ENCODE measurements at regions of chr20 and their contacts with region 1.

Region 1: GRCh38 chr20:45011108-45011526 is 44.8 kb downstream of the STK4 start:
- DNase-seq: peak; percentile 43 to 58
- H3K4me3 ChIP-seq: no peak overlapping the region
- H3K27ac ChIP-seq: no peak overlapping the region
- H3K4me1 ChIP-seq: peaks cover 46% of the 10 kb centered on the region
- H3K27me3 ChIP-seq: no peaks in the 10 kb centered on the region
- CTCF ChIP-seq: peak; percentile 94

Region 2: GRCh38 chr20:43942661-43943290 is 1068.3 kb before region 1 on chr20:
- CTCF ChIA-PET with region 1: no interaction called
- POLR2A ChIA-PET with region 1: no interaction called
- intact Hi-C with region 1: no loop called
- DNase-seq: peak; percentile 70 to 85
- H3K4me3 ChIP-seq: peak overlapping the region; percentile 53
- H3K27ac ChIP-seq: peak overlapping the region; percentile 95
- H3K4me1 ChIP-seq: peaks cover 68% of the 10 kb centered on the region
- H3K27me3 ChIP-seq: no peaks in the 10 kb centered on the region
- CTCF ChIP-seq: no peak

Region 3: GRCh38 chr20:44997171-44998067 is 13.7 kb before region 1 on chr20:
- CTCF ChIA-PET with region 1: no interaction called
- POLR2A ChIA-PET with region 1: no interaction called
- intact Hi-C with region 1: no loop called
- DNase-seq: no peak
- H3K4me3 ChIP-seq: no peak overlapping the region
- H3K27ac ChIP-seq: no peak overlapping the region
- H3K4me1 ChIP-seq: peaks cover 12% of the 10 kb centered on the region; the same call in 1 of the 2 replicates
- H3K27me3 ChIP-seq: no peaks in the 10 kb centered on the region
- CTCF ChIP-seq: no peak

Region 4: DNA sequence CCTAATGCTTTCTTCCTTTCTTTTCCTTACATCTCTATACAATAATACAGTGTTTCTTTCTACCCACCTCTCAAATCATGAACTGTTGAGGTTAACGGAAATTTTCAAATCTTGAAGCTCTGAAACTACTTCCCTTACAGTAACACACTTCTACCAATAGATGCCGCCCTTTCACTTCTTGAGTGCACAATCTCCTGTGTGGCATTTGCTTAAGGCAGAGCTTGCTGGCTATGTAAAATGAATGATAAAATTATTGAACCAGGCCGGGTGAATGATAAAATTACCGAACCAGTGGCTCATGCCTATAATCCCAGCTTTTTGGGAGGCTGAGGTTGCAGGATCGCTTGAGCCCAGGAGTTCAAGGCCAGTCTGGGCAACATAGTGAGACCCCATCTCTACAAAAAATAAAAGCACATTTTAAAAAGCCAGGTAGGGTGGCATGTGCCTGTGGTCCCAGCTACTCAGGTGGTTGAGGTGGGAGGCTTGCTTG is 33.0 kb after region 1 on chr20:
- CTCF ChIA-PET with region 1: interaction called, 27 read pairs
- POLR2A ChIA-PET with region 1: interaction called, 9 read pairs
- intact Hi-C with region 1: loop called (anchors 1 kb)
- DNase-seq: peak; percentile 37 to 77
- H3K4me3 ChIP-seq: no peak overlapping the region
- H3K27ac ChIP-seq: no peak overlapping the region
- H3K4me1 ChIP-seq: peaks cover 26% of the 10 kb centered on the region
- H3K27me3 ChIP-seq: no peaks in the 10 kb centered on the region
- CTCF ChIP-seq: peak; percentile 96

Region 5: DNA sequence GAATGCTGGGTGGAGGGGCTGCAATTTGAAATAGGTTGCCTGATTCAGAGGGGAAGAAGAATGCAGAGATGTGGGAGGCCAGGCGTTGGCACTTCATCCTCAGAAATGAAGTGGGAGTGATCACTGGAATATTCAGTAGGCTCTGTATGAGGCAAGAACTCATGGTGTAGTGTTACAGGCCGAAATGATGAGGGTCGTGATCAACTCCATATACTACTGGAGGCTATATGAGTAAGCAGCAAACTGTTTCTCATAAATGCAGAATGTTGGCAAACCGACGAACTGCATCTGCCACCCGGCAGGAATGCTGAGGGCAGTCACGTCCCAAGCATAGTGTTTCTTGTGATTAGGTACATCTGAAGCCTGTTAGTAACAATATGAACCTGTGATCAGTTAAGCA is 77.1 kb after region 1 on chr20:
- CTCF ChIA-PET with region 1: interaction called, 18 read pairs
- POLR2A ChIA-PET with region 1: no interaction called
- intact Hi-C with region 1: no loop called
- DNase-seq: peak in 1 of 2 experiments; percentile 78
- H3K4me3 ChIP-seq: no peak overlapping the region
- H3K27ac ChIP-seq: peak overlapping the region; percentile 41
- H3K4me1 ChIP-seq: peaks cover 14% of the 10 kb centered on the region
- H3K27me3 ChIP-seq: no peaks in the 10 kb centered on the region
- CTCF ChIP-seq: no peak

Region 6: GRCh38 chr20:45157962-45158361 is 146.8 kb after region 1 on chr20:
- CTCF ChIA-PET with region 1: interaction called, 16 read pairs
- POLR2A ChIA-PET with region 1: no interaction called
- intact Hi-C with region 1: no loop called
- DNase-seq: peak in 1 of 2 experiments; percentile 85
- H3K4me3 ChIP-seq: no peak overlapping the region
- H3K27ac ChIP-seq: no peak overlapping the region
- H3K4me1 ChIP-seq: peaks cover 22% of the 10 kb centered on the region
- H3K27me3 ChIP-seq: no peaks in the 10 kb centered on the region
- CTCF ChIP-seq: no peak

Region 7: GRCh38 chr20:45293041-45294002 is 282.2 kb after region 1 on chr20:
- CTCF ChIA-PET with region 1: interaction called, 9 read pairs
- POLR2A ChIA-PET with region 1: no interaction called
- intact Hi-C with region 1: loop called (anchors 1 kb)
- DNase-seq: peak; percentile 61 to 91
- H3K4me3 ChIP-seq: peak overlapping the region; percentile 60
- H3K27ac ChIP-seq: no peak overlapping the region
- H3K4me1 ChIP-seq: peaks cover 15% of the 10 kb centered on the region
- H3K27me3 ChIP-seq: no peaks in the 10 kb centered on the region
- CTCF ChIP-seq: peak; percentile 97

Region 8: DNA sequence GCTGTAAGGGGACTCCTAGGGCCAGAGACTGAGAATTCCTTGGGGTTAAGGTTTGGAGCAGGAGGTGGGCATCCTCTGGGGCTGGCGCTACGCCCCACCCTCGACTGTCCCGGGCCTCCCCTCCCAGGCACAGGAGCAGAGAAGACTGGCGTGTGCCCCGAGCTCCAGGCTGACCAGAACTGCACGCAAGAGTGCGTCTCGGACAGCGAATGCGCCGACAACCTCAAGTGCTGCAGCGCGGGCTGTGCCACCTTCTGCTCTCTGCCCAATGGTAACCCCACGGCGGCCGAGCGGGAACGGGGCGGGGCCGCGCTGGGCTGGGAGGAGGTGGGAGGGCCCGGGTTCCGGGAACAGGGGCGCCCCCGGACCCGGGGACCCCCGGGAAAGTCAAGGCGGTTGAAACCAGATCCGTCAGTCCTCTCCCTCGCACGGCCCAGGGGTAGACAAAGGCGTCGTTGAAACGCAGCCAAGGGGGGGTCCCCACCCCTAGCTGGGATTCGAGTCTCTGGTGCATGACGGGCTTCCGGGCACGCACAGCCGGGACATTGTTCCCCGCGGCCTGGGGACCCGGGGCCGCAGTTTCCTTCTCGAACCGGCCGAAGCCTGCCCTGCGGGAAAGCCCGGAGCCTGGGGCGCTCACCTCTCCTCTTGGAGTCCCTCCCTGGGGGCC is 459.3 kb after region 1 on chr20:
- CTCF ChIA-PET with region 1: interaction called, 10 read pairs
- POLR2A ChIA-PET with region 1: no interaction called
- intact Hi-C with region 1: no loop called
- DNase-seq: peak; percentile 63 to 82
- H3K4me3 ChIP-seq: peak overlapping the region; percentile 67
- H3K27ac ChIP-seq: peak overlapping the region; percentile 88
- H3K4me1 ChIP-seq: peaks cover 29% of the 10 kb centered on the region
- H3K27me3 ChIP-seq: no peaks in the 10 kb centered on the region
- CTCF ChIP-seq: no peak